ENCODE measurements at regions of chr17 and their contacts with region 1.

Region 1: DNA sequence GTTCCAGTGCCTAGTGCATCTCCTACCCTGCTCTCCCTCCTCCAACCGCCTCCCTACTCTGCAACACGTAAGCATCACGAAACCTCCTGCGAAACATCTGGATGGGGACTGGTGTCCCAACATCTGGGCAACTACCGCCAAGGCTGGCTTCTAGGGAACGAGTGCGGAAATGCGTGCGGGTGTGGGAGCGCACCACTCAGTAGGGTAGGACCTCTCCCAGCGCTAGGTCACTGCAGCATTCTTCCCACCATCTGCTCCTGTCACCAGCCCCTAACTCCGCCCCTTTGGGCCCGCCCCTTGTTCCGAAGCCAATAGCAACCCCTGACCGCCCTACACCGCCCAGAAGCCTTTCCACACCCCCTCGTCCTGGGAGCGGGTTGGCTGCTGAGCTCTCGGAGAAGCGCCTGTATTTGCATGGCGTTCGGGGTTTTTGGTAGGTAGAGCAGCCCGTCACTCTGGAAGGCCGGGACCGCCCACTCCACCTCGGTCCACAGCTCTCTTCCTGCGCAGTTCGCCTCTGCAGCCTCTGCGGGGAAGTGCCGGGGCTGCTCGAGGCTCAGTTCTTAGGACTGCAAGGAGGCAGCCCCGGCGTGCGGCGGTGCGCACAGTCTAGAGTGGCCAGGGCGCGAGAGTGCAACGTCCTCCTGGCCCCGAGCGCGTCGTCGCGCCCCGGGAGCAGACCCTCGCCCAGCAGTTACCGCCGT is at the start of gene HS3ST3B1:
- DNase-seq: peak; percentile 96 to 99 (median 98)
- ATAC-seq: peak; percentile 90
- H3K4me3 ChIP-seq: peak within 1 kb of the TSS; percentile 59 to 73
- H3K27ac ChIP-seq: peak within 1 kb of the TSS; percentile 73 to 94
- H3K4me1 ChIP-seq: peaks cover 16 to 73% of the 10 kb centered on the region in 2 donors
- H3K27me3 ChIP-seq: peaks cover 55 to 100% of the 10 kb centered on the region in 2 donors
- CTCF ChIP-seq: no peak
- polyA plus RNA-seq, gene HS3ST3B1: 1.9 to 3.3 (median 2.3) TPM

Region 2: GRCh38 chr17:13601776-13602551 is 698.8 kb before region 1 on chr17 and contains the start of gene HS3ST3A1:
- intact Hi-C with region 1: loop called in 1 of 2 experiments (anchors 10 kb)
- DNase-seq: peak; percentile 59 to 92 (median 80)
- ATAC-seq: peak; percentile 89
- H3K4me3 ChIP-seq: peak within 1 kb of the TSS; percentile 31 to 34
- H3K27ac ChIP-seq: peak within 1 kb of the TSS in 1 of 2 donors; percentile 71
- H3K4me1 ChIP-seq: peaks cover 0 to 19% of the 10 kb centered on the region in 2 donors
- H3K27me3 ChIP-seq: peaks cover 42 to 97% of the 10 kb centered on the region in 2 donors
- CTCF ChIP-seq: no peak
- polyA plus RNA-seq, gene HS3ST3A1: 3.9 to 9.5 (median 4.7) TPM

Region 3: DNA sequence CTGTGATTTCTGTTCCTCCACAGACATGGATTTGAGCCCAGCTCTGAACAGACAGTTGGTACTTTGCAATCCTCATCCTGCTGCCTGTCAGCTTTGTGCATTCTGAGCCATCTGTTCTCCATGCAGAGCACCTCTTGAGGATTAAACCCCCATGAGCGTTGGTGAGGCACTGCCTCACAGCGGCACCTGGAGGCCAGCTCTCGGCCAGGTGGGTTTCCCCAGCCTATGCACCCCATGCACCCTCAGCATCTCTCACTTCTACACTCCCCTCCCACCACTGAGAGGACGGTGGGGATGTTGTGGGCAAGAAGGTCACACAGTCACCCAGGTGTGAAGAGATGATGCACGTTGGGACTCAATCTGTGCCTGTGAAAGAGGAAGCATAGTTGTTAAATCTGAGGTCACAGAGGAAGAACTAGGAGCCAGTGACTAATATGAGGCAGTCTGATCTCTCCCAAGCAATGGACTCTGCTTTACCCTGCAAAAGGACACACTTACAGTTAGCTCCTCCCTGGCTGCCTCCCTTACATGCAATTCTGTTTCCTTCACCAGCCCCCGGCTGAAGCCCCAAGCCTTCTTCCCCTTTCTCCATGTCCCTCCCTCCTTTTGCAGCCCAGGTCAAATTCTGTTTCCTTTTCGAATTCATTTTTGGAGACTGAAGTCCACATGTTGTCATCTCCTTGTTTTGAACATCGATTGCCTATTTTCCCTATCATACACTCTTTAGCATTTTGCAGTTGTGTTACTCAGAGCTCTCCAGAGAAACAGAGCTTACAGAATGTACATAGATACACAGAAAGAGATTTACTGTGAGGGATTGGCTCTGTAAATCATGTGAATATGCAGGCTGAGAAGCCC is 58.7 kb after region 1 on chr17:
- intact Hi-C with region 1: no loop called
- DNase-seq: peak in 1 of 4 donors; percentile 40
- ATAC-seq: peak; percentile 90
- H3K4me3 ChIP-seq: no peak overlapping the region
- H3K27ac ChIP-seq: peak overlapping the region in 1 of 2 donors; percentile 10
- H3K4me1 ChIP-seq: peaks cover 0 to 25% of the 10 kb centered on the region in 2 donors
- H3K27me3 ChIP-seq: no peaks in the 10 kb centered on the region
- CTCF ChIP-seq: no peak

Measured in left lung (tissue), 14 donors.